Posterior cingulate gyrus (tissue), 11 donors: ENCODE measurements at regions of chr10 and their contacts with region 1.

Region 1: DNA sequence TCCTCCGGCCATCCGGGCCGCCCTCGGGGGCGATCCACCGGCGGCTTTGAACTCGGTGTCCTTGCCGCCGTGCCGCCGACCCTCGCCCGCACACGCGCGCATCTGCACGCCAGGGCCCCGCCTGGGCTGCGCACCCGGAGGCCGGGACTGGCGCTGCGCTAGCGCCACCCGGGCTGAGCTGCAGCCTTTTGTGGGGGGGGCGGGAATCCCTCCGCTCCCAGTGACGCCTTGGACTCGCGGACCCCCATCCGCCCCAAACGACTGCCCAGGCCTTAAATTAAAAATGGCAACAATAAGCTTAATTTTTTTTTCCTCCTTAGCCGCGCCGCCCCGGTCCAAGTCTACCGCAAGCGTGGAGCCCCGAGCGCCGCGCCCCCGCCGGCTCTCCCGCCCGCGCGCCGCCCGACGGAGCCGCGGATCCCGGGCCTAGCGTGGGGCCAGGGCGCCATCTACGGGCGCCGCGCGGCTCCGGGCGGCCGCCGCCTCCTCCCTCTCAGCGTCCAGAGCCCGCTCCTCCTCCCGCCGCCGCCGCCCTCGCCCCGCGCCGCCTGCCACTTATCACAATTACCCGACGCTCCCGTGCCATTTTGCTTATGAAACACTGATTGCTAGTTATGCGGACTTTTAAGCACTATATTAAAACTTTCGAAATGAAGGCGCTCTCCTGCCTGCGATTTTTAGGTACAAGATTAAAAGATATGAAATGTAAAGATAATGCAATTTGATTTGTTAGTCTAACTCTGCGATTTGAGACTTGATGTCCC is 7.5 kb upstream of the EBF3 start:
- DNase-seq: peak in 3 of 10 donors; percentile 12 to 84 (median 59)

Region 2: GRCh38 chr10:128263891-128264688 is 1707.5 kb before region 1 on chr10:
- intact Hi-C with region 1: loop called (anchors 5 kb)
- DNase-seq: peak; percentile 63 to 96 (median 82)

Region 3: GRCh38 chr10:129030996-129031843 is 940.3 kb before region 1 on chr10:
- intact Hi-C with region 1: loop called (anchors 5 kb)
- DNase-seq: peak in 5 of 10 donors; percentile 29 to 91 (median 43)

Region 4: DNA sequence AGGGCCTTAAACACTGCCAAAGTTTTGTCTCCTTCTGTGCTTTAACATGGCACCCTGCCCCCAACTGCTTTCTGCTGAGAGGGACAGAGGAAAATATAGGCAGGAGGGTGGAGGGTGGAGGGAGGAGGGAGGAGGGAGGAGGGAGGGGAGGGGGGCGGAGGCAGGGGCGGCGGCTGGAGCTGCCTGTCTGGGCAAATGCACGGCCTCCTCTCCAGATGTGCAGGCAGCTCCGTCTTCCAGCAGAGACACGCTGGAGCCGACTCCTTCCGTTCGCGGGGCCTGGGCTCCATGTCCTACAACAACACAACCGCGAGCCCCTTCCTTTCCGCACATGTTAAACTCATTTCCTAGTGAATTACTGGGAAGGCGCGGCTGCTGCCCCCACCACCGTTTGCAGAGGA is 21.7 kb before region 1 on chr10:
- intact Hi-C with region 1: no loop called
- DNase-seq: no peak